ENCODE measurements at regions of chr15 and their contacts with region 1.

Region 1: GRCh38 chr15:38991126-38991525 is 426.5 kb upstream of the RASGRP1 start:
- DNase-seq: no peak
- H3K4me3 ChIP-seq: no peak overlapping the region
- CTCF ChIP-seq: peak; percentile 24

Region 2: GRCh38 chr15:38707802-38708671 is 283.1 kb before region 1 on chr15:
- CTCF ChIA-PET with region 1: interaction called, 18 read pairs
- POLR2A ChIA-PET with region 1: no interaction called
- DNase-seq: no peak
- H3K4me3 ChIP-seq: no peak overlapping the region
- CTCF ChIP-seq: peak; percentile 70

Region 3: GRCh38 chr15:38768970-38769369 is 222.2 kb before region 1 on chr15:
- CTCF ChIA-PET with region 1: interaction called, 12 read pairs
- POLR2A ChIA-PET with region 1: no interaction called
- DNase-seq: no peak
- H3K4me3 ChIP-seq: no peak overlapping the region
- CTCF ChIP-seq: peak; percentile 16

Region 4: GRCh38 chr15:38972831-38973230 is 18.3 kb before region 1 on chr15:
- CTCF ChIA-PET with region 1: interaction called, 14 read pairs
- POLR2A ChIA-PET with region 1: no interaction called
- DNase-seq: no peak
- H3K4me3 ChIP-seq: no peak overlapping the region
- CTCF ChIP-seq: no peak

Region 5: GRCh38 chr15:39028069-39028468 is 36.9 kb after region 1 on chr15:
- CTCF ChIA-PET with region 1: no interaction called
- POLR2A ChIA-PET with region 1: no interaction called
- DNase-seq: no peak
- H3K4me3 ChIP-seq: no peak overlapping the region
- CTCF ChIP-seq: no peak

Measured in AG04449 (cell line).